Colonic mucosa (tissue), 4 donors: ENCODE measurements at regions of chr17 and their contacts with region 1.

Region 1: DNA sequence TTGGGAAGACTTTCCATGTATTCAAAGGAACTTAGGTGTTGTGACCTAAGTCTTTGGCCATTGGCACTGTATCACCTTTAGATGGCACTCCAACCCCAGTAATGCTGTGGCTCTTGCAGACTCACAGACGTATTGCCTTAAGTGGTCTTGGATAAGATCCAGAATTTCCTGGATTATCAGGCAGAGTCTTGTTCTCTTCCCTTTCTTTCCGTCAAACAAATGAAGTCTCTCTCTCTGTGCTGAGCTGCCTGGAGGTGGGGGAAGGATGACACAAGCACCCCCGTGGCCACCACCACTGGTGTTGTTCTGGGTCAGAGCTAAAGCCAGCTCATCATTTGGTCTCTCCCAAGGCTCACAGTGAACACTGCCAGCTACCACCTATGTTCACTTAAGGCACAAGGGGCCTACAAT is 789.9 kb upstream of the KIF2B start:
- DNase-seq: peak; percentile 37
- H3K4me3 ChIP-seq: no peak overlapping the region
- H3K27ac ChIP-seq: no peak overlapping the region
- H3K4me1 ChIP-seq: no peaks in the 10 kb centered on the region
- H3K27me3 ChIP-seq: no peaks in the 10 kb centered on the region
- CTCF ChIP-seq: no peak

Region 2: GRCh38 chr17:54891176-54891821 is 1858.4 kb after region 1 on chr17:
- intact Hi-C with region 1: loop called (anchors 5 kb)
- DNase-seq: no peak
- H3K4me3 ChIP-seq: no peak overlapping the region
- H3K27ac ChIP-seq: no peak overlapping the region
- H3K4me1 ChIP-seq: no peaks in the 10 kb centered on the region
- H3K27me3 ChIP-seq: no peaks in the 10 kb centered on the region
- CTCF ChIP-seq: peak; percentile 17